ENCODE measurements at regions of chr18 and their contacts with region 1.

Region 1: GRCh38 chr18:5879479-5879882 is 15.8 kb downstream of the TMEM200C start:
- DNase-seq: no peak
- H3K4me3 ChIP-seq: no peak overlapping the region
- H3K27ac ChIP-seq: no peak overlapping the region
- H3K4me1 ChIP-seq: no peaks in the 10 kb centered on the region
- H3K27me3 ChIP-seq: no peaks in the 10 kb centered on the region
- CTCF ChIP-seq: peak; percentile 52 to 69 (median 63)
- EP300 ChIP-seq: no peak
- POLR2A ChIP-seq: no peak

Region 2: GRCh38 chr18:5673576-5673975 is 205.9 kb before region 1 on chr18:
- intact Hi-C with region 1: no loop called
- DNase-seq: no peak
- H3K4me3 ChIP-seq: no peak overlapping the region
- H3K27ac ChIP-seq: no peak overlapping the region
- H3K4me1 ChIP-seq: no peaks in the 10 kb centered on the region
- H3K27me3 ChIP-seq: no peaks in the 10 kb centered on the region
- CTCF ChIP-seq: no peak
- EP300 ChIP-seq: no peak
- POLR2A ChIP-seq: no peak

Region 3: GRCh38 chr18:6482198-6482977 is 602.9 kb after region 1 on chr18:
- intact Hi-C with region 1: loop called in 3 of 4 experiments (anchors 5 kb)
- DNase-seq: peak; percentile 81 to 88 (median 85)
- H3K4me3 ChIP-seq: no peak overlapping the region
- H3K27ac ChIP-seq: no peak overlapping the region
- H3K4me1 ChIP-seq: no peaks in the 10 kb centered on the region
- H3K27me3 ChIP-seq: no peaks in the 10 kb centered on the region
- CTCF ChIP-seq: peak; percentile 82 to 89 (median 83)
- EP300 ChIP-seq: no peak
- POLR2A ChIP-seq: no peak